Gastrocnemius medialis (tissue), 4 donors: ENCODE measurements at regions of chr1 and their contacts with region 1.

Region 1: GRCh38 chr1:153990468-153991150 is at the start of gene RPS27:
- DNase-seq: peak; percentile 92 to 95
- ATAC-seq: peak; percentile 92 to 95
- H3K4me3 ChIP-seq: peak within 1 kb of the TSS; percentile 80 to 98 (median 90)
- H3K27ac ChIP-seq: peak within 1 kb of the TSS; percentile 92 to 97 (median 94)
- H3K4me1 ChIP-seq: peaks cover 24 to 26% of the 10 kb centered on the region in 2 donors
- H3K27me3 ChIP-seq: no peaks in the 10 kb centered on the region
- CTCF ChIP-seq: no peak
- POLR2A ChIP-seq: peak; percentile 99
- total RNA-seq, gene RPS27: 1,269 to 1,948 (median 1,828) TPM

Region 2: DNA sequence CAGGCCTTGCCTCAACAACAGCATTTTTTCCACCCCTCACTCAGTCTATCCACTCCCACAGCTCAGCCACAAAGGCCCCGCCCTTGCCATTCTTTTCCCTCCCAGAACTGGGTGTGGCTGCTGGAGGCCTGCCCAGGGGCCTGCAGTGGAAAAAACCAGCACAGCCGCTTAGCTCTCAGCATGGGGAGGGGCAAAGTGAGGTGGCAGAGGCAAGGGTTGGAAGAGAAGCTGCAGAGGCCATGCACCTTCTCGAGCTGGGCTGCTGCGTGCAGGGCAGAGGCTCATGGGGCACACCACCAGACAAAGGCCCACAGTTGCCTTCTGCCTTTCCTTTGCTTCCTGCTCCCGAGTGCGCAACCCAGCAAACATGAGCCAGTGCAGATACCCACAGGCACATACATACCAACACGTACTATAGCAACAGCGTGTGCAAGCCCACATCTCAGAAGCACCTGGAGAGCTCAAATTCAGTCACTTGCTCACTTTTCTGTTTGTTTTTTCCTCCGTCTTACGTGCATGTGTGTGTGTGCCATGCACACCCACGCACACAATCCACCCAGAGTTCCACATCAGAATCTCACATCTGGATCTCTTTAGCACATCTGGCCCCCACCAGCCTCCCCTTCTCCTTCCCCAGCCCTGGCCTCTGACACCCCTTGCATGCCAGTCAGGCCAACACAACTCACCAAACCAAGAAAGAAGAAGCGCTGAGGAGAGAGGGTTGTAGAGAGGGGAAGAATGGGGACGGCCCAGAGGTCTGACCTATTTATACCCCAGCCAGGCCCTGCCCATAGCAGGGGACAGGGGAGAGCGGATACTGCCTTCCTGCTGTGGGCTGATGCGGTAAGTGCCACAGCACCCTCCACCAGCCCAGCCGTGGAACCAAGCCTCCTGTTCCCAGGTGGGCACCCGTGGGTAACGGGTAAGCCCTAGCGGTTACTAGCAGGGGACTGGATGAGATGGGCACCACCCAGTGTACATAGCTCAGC is 445.2 kb before region 1 on chr1 and contains the start of gene S100A4:
- in situ Hi-C with region 1: loop called in 1 of 4 experiments (anchors 25 kb)
- intact Hi-C with region 1: no loop called
- DNase-seq: peak; percentile 88 to 96
- ATAC-seq: peak; percentile 87
- H3K4me3 ChIP-seq: peak within 1 kb of the TSS; percentile 41 to 48 (median 46)
- H3K27ac ChIP-seq: peak within 1 kb of the TSS; percentile 63 to 81 (median 72)
- H3K4me1 ChIP-seq: peaks cover 30 to 64% of the 10 kb centered on the region in 2 donors
- H3K27me3 ChIP-seq: no peaks in the 10 kb centered on the region
- CTCF ChIP-seq: no peak
- POLR2A ChIP-seq: peak; percentile 25 to 26
- total RNA-seq, gene S100A4: 76.8 to 377 (median 144) TPM

Region 3: GRCh38 chr1:153670859-153671627 is 319.6 kb before region 1 on chr1 and contains the start of gene ILF2:
- in situ Hi-C with region 1: loop called in 3 of 4 experiments (anchors 25 kb)
- intact Hi-C with region 1: loop called (anchors 2 kb)
- DNase-seq: peak; percentile 98 to 99
- ATAC-seq: peak; percentile 99 to 100
- H3K4me3 ChIP-seq: peak within 1 kb of the TSS; percentile 72 to 99 (median 86)
- H3K27ac ChIP-seq: peak within 1 kb of the TSS; percentile 87 to 90 (median 89)
- H3K4me1 ChIP-seq: peaks cover 15 to 17% of the 10 kb centered on the region in 2 donors
- H3K27me3 ChIP-seq: no peaks in the 10 kb centered on the region
- CTCF ChIP-seq: no peak
- POLR2A ChIP-seq: peak; percentile 97
- total RNA-seq, gene ILF2: 110 to 138 (median 117) TPM

Region 4: DNA sequence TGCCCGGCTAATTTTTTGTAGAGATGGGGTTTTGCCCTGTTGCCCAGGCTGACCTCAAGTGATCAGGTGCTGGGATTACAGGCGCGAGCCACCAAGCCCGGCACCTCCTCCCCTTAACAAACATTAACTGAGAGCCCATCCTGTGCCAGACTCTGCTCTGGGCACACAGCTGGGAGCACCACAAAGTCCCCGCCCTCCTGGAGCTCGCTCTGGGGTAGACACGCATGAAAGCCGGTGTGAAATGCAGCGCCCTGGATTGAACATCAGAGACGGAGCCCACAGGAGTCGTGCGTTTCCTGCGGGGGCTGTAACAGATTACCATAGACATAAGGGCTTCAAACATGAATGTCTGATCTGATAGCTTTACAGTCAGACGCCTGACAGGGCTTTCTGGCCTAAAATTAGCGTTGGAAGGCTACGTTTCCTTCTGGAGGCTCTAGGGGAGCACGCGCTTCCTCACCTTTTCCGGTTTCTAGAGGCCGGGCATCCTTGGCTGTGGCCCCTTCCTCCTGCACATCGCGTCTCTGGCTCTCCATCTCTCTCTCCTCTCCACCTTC is 201.1 kb before region 1 on chr1:
- in situ Hi-C with region 1: loop called in 2 of 4 experiments (anchors 5 to 10 kb)
- intact Hi-C with region 1: no loop called
- DNase-seq: peak in 1 of 2 donors; percentile 13
- ATAC-seq: peak; percentile 23 to 24
- H3K4me3 ChIP-seq: peak overlapping the region; percentile 36 to 45 (median 41)
- H3K27ac ChIP-seq: peak overlapping the region; percentile 67 to 88 (median 78)
- H3K4me1 ChIP-seq: peaks cover 11 to 18% of the 10 kb centered on the region in 2 donors
- H3K27me3 ChIP-seq: no peaks in the 10 kb centered on the region
- CTCF ChIP-seq: no peak
- POLR2A ChIP-seq: no peak

Region 5: GRCh38 chr1:153922972-153923925 is 67.4 kb before region 1 on chr1 and contains the start of gene GATAD2B:
- in situ Hi-C with region 1: loop called in 1 of 4 experiments (anchors 10 kb)
- intact Hi-C with region 1: loop called (anchors 5 kb)
- DNase-seq: peak; percentile 100
- ATAC-seq: peak; percentile 96 to 98
- H3K4me3 ChIP-seq: peak within 1 kb of the TSS; percentile 56 to 93 (median 92)
- H3K27ac ChIP-seq: peak within 1 kb of the TSS; percentile 98 to 99 (median 98)
- H3K4me1 ChIP-seq: peaks cover 42% of the 10 kb centered on the region in 2 donors
- H3K27me3 ChIP-seq: no peaks in the 10 kb centered on the region
- CTCF ChIP-seq: no peak
- POLR2A ChIP-seq: peak; percentile 2 to 68
- total RNA-seq, gene GATAD2B: 22.0 to 40.7 (median 28.1) TPM

Region 6: DNA sequence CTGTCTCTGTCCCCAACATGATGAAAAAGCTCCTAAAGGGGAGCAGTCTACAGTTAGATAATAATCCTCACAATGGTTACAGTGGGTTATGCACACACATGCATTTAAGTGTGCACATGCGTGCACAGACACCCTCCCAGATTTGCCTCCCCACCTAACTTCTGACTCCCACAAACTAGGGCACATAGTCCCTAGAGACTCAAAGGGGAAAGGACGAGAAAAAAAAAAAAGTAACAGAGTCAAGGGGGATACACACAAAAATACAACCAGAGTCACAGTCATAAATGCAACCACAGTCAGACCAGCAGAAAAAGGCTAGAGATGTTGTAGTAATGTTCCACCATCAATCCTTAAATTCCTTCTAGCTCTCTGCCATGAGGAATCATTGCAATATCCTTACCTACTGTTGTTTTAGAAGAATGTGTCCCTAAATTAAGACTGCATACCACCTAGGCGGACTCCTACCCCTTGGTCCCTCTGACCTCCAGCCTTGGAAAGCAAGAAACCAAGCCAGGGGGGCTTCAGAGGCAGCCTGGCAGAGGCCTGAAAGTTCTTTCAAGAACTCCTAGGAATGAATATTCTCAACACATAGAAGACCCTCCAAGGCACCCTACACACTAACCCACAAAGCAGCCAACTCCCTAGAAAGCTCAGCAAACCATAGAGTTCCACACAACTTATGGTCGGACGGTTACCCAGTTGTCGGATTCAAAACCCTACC is 33.5 kb before region 1 on chr1:
- in situ Hi-C with region 1: no loop called
- intact Hi-C with region 1: no loop called
- DNase-seq: no peak
- ATAC-seq: no peak
- H3K4me3 ChIP-seq: peak overlapping the region; percentile 88 to 100 (median 98)
- H3K27ac ChIP-seq: peak overlapping the region; percentile 91 to 98 (median 94)
- H3K4me1 ChIP-seq: peaks cover 64% of the 10 kb centered on the region in 2 donors
- H3K27me3 ChIP-seq: no peaks in the 10 kb centered on the region
- CTCF ChIP-seq: no peak
- POLR2A ChIP-seq: no peak

Region 7: DNA sequence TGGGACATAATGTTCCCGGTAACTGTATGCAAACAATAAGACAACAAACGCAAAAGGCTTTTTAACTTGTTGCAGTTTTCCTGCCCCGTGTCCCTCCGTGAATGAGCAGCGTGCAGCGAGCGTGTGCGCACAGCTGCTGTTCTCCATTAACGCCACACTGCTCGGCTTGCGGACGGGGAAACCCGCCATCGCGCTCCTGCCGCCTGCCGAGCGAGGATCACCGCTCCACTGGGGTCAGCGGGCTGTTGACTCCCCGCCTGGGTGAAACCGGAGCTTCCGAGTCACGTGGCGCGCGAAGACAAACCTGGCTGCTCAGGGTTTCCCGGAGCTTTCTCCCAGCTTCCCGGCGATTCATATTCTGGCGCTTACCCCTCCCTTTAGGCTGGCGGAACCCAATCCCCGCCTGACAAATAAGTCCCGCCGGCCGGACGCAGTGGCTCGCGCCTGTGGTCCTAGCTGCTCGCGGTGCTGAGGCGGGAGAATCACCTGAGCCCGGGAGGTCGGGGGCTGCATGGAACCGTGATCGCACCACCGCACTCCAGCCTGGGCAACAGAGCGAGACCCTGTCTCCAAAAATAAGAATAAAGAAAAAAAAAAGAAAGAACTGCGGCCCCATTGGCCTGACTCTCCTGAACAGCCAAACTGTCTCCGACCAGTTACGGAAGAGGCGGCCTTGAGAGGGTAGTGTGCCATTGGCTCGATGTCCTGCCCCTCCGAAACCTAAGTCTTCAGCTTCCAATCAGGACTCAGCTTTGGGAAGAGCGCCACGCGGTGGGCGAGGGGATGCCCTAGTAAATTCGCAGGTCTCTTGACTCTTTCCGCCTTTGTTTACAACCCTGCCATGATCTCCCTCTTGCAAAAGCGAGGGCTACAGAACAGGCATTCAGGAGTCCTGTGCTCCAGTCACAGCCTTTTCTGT is 23.3 kb before region 1 on chr1 and contains the start of gene CREB3L4:
- in situ Hi-C with region 1: no loop called
- intact Hi-C with region 1: loop called (anchors 1 kb)
- DNase-seq: peak; percentile 97
- ATAC-seq: peak; percentile 85 to 90
- H3K4me3 ChIP-seq: peak within 1 kb of the TSS; percentile 56 to 68 (median 62)
- H3K27ac ChIP-seq: peak within 1 kb of the TSS; percentile 87 to 94 (median 90)
- H3K4me1 ChIP-seq: peaks cover 29 to 34% of the 10 kb centered on the region in 2 donors
- H3K27me3 ChIP-seq: no peaks in the 10 kb centered on the region
- CTCF ChIP-seq: peak in 4 of 5 experiments; percentile 25 to 51 (median 34)
- POLR2A ChIP-seq: peak; percentile 74 to 89
- total RNA-seq, gene CREB3L4: 4.5 to 7.9 (median 5.7) TPM

Region 8: DNA sequence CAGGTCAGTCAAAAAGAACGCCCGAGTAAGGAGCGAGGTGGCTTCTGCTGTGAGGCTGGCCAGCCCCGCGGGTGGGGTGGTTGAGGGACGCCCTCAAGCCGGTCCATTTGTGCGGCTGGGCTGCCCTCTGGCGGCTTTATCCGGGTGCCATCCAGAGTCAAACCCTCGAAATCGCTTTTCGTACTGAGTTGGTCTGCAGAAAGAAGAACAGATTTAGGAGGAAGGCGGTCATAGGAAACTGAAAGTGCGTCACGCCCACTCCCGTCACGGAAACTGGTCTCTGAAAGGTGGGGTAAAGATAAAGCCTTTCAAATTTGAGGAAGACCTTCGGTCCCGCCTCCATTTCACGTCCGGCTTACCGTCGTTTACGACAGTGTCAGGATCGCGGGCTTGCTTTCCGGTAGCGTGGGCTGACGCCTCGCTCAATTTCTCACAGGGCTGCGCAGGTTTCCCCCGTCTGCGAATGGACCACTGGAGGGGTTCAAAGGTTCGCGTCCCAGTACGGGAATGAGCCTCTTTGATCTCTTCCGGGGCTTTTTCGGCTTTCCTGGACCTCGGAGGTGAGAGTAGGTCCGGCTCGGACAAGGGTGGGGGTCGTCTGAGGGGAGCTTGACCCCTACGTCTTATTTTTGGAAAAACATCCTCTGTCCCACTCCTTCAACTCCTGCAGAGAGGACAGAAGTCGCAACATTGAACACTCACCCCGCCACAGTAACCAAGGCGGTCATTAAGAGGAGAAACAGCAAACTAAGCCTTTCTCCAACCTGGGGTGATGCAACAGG is 281.8 kb after region 1 on chr1 and contains the start of gene HAX1:
- in situ Hi-C with region 1: loop called in 1 of 4 experiments (anchors 10 kb)
- intact Hi-C with region 1: loop called (anchors 5 kb)
- DNase-seq: peak; percentile 82 to 90
- ATAC-seq: peak; percentile 88 to 92
- H3K4me3 ChIP-seq: peak within 1 kb of the TSS; percentile 75 to 98 (median 84)
- H3K27ac ChIP-seq: peak within 1 kb of the TSS; percentile 87 to 93 (median 90)
- H3K4me1 ChIP-seq: peaks cover 7 to 11% of the 10 kb centered on the region in 2 donors
- H3K27me3 ChIP-seq: no peaks in the 10 kb centered on the region
- CTCF ChIP-seq: peak; percentile 82 to 94 (median 87)
- POLR2A ChIP-seq: peak; percentile 52 to 59
- total RNA-seq, gene HAX1: 145 to 205 (median 177) TPM